Adrenal gland (tissue), 19 donors: ENCODE measurements at regions of chr1 and their contacts with region 1.

Region 1: DNA sequence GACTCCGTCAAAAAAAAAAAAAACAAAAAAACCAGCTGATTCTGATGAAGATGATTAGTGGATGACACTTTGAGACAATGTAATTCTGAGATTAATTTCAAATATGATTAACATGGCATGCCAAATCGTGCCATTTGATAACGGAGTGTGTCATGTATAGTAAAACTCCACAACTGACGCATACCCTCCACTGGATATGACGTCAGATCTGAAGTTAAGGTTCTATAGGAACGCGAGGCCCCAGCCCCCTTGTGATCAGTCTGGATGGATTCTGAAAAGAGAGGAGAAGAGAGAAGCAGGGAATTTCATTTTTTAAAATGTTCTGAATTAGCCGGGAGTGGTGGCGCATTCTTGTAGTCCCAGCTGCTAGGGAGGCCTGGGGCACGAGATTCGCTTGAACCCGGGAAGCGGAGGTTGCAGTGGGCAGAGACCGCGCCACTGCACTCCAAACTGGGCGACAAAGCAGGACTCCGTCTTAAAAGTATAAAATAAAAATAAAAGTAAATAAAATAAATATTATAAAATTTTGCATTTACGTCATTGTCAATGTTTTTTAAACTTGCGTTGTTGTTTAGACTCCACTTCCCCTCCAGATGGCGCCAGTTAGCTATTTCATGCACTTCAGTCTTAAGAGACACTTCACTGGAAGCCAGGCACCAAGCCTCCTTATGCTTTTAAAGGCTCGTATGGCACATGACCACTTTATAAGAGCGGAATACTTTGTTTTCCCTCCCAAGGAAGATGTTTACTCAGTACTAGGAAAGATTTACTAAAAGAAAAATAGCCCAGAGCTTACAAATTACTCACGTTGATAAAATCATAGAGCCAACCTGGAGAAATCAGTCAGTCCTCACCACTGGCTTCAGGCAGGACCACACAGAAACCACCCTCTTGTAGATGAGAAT is 65.5 kb downstream of the UBE2U start:
- DNase-seq: peak; percentile 65 to 86 (median 81)
- H3K4me3 ChIP-seq: no peak overlapping the region
- H3K27ac ChIP-seq: no peak overlapping the region
- H3K4me1 ChIP-seq: no peaks in the 10 kb centered on the region
- H3K27me3 ChIP-seq: no peaks in the 10 kb centered on the region
- CTCF ChIP-seq: peak; percentile 62 to 83 (median 74)
- POLR2A ChIP-seq: no peak

Region 2: GRCh38 chr1:64675718-64676345 is 406.9 kb after region 1 on chr1:
- intact Hi-C with region 1: loop called in 1 of 2 experiments (anchors 10 kb)
- DNase-seq: no peak
- H3K4me3 ChIP-seq: no peak overlapping the region
- H3K27ac ChIP-seq: no peak overlapping the region
- H3K4me1 ChIP-seq: no peaks in the 10 kb centered on the region
- H3K27me3 ChIP-seq: no peaks in the 10 kb centered on the region
- CTCF ChIP-seq: peak; percentile 27 to 67 (median 47)
- POLR2A ChIP-seq: no peak